ENCODE measurements at regions of chr11 and their contacts with region 1.

Region 1: GRCh38 chr11:727859-728748 is 19.2 kb upstream of the TALDO1 start:
- DNase-seq: peak; percentile 64 to 88 (median 83)
- ATAC-seq: peak; percentile 84
- H3K4me3 ChIP-seq: no peak overlapping the region
- H3K4me3 Mint-ChIP-seq: no peak overlapping the region
- H3K27ac ChIP-seq: no peak overlapping the region
- H3K27ac Mint-ChIP-seq: no peak overlapping the region
- H3K4me1 ChIP-seq: peaks cover 19% of the 10 kb centered on the region
- H3K4me1 Mint-ChIP-seq: peaks cover 10% of the 10 kb centered on the region
- H3K27me3 ChIP-seq: peaks cover 0 to 3% of the 10 kb centered on the region in 2 experiments
- H3K27me3 Mint-ChIP-seq: peaks cover 3% of the 10 kb centered on the region
- CTCF ChIP-seq: peak; percentile 94

Region 2: DNA sequence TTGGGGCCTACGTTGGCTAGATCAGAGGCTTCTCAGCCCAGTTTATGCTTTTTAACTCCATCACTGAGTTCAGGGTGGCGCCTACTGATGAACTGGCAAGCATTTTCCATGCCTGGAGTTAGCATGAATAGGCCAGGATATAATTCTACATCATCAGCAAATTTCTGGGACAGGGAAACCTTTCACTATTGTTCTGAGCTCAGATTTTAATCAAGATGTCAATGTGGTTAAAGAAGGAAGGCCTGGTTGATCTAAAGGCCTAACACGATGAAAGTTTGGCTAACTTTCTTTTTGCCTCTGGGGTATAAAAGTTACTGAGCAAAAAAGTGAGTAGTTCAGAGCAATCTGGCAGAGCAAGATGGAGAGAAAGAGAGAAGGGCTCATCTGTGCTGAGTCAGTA is 385.8 kb before region 1 on chr11:
- CTCF ChIA-PET with region 1: no interaction called
- POLR2A ChIA-PET with region 1: no interaction called
- intact Hi-C with region 1: no loop called
- DNase-seq: no peak
- ATAC-seq: no peak
- H3K4me3 ChIP-seq: no peak overlapping the region
- H3K4me3 Mint-ChIP-seq: no peak overlapping the region
- H3K27ac ChIP-seq: no peak overlapping the region
- H3K27ac Mint-ChIP-seq: no peak overlapping the region
- H3K4me1 ChIP-seq: peaks cover 17% of the 10 kb centered on the region
- H3K4me1 Mint-ChIP-seq: peaks cover 17% of the 10 kb centered on the region
- H3K27me3 ChIP-seq: no peaks in the 10 kb centered on the region
- H3K27me3 Mint-ChIP-seq: no peaks in the 10 kb centered on the region
- CTCF ChIP-seq: no peak

Region 3: GRCh38 chr11:422249-422656 is 305.9 kb before region 1 on chr11:
- CTCF ChIA-PET with region 1: no interaction called
- POLR2A ChIA-PET with region 1: no interaction called
- intact Hi-C with region 1: no loop called
- DNase-seq: no peak
- ATAC-seq: no peak
- H3K4me3 ChIP-seq: no peak overlapping the region
- H3K4me3 Mint-ChIP-seq: no peak overlapping the region
- H3K27ac ChIP-seq: no peak overlapping the region
- H3K27ac Mint-ChIP-seq: peak overlapping the region; percentile 38
- H3K4me1 ChIP-seq: peaks cover 6% of the 10 kb centered on the region
- H3K4me1 Mint-ChIP-seq: no peaks in the 10 kb centered on the region
- H3K27me3 ChIP-seq: no peaks in the 10 kb centered on the region
- H3K27me3 Mint-ChIP-seq: no peaks in the 10 kb centered on the region
- CTCF ChIP-seq: no peak

Region 4: DNA sequence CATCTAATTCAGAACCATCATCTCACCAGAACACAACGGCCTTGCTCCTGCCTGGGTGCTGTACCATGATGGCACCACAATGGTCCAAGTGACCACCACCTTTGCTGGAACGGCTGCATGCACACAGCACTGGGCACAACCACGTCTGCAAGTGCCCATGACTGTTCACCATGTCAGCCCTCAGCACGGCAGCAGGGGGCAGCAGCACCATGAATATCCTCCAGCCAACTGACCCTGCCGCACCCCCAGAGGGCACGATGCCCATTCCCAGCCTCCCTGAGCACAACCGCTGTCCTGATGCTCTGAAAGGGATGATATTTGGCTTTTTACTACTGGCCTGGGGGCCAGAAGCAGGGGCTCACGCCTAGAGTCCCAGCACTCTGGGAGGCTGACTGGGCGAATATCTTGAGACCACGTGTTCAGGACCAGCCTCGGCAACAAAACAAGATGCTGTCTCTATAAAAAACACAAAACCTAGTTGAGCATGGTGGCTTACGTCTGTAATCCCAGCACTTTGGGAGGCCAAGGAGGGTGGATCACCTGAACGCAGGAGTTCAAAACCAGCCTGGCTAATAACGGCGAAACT is 65.3 kb before region 1 on chr11:
- CTCF ChIA-PET with region 1: interaction called, 11 read pairs
- POLR2A ChIA-PET with region 1: no interaction called
- intact Hi-C with region 1: loop called (anchors 1 kb)
- DNase-seq: peak in 6 of 9 experiments; percentile 27 to 60 (median 48)
- ATAC-seq: peak; percentile 77
- H3K4me3 ChIP-seq: no peak overlapping the region
- H3K4me3 Mint-ChIP-seq: no peak overlapping the region
- H3K27ac ChIP-seq: no peak overlapping the region
- H3K27ac Mint-ChIP-seq: no peak overlapping the region
- H3K4me1 ChIP-seq: no peaks in the 10 kb centered on the region
- H3K4me1 Mint-ChIP-seq: no peaks in the 10 kb centered on the region
- H3K27me3 ChIP-seq: no peaks in the 10 kb centered on the region
- H3K27me3 Mint-ChIP-seq: no peaks in the 10 kb centered on the region
- CTCF ChIP-seq: peak; percentile 69

Region 5: DNA sequence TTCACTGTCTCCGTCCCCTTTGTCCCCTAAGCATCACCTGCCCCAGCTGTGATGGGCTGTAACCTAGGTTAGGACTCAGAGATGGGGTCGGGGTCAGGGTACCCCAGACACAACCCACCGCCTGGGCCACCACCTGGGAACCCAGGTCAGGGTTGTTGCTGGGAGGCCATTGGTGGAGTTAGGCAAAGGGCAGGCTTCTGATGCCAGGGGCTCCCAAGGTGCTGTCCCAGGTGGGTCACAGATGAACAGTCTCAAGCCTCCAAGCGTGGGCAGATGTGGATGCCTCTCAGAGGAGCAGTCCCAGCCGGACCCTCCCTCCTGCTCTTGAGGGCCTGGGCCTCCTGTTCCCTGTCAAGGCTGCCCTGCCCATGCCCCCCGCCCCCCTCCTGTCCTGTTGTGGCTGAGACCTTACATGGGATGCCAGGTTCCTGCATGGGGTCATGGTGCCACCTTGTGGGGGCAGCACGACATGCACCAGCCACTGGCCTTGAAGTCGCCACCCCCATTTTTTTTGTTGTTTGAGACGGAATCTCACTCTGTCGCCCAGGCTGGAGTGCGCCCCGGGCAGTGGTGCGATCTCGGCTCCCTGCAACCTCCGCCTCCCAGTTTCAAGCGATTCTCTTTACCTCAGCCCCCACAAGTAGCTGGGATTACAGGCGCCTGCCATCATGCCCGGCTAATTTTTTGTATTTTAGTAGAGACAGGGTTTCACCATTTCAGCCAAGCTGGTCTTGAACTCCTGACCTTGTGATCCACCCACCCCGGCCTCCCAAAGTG is 37.1 kb after region 1 on chr11:
- CTCF ChIA-PET with region 1: interaction called, 9 read pairs
- POLR2A ChIA-PET with region 1: no interaction called
- intact Hi-C with region 1: loop called in 1 of 2 experiments (anchors 1 kb)
- DNase-seq: peak; percentile 41 to 80 (median 70)
- ATAC-seq: peak; percentile 94
- H3K4me3 ChIP-seq: no peak overlapping the region
- H3K4me3 Mint-ChIP-seq: no peak overlapping the region
- H3K27ac ChIP-seq: no peak overlapping the region
- H3K27ac Mint-ChIP-seq: no peak overlapping the region
- H3K4me1 ChIP-seq: no peaks in the 10 kb centered on the region
- H3K4me1 Mint-ChIP-seq: no peaks in the 10 kb centered on the region
- H3K27me3 ChIP-seq: no peaks in the 10 kb centered on the region
- H3K27me3 Mint-ChIP-seq: no peaks in the 10 kb centered on the region
- CTCF ChIP-seq: peak; percentile 63

Region 6: DNA sequence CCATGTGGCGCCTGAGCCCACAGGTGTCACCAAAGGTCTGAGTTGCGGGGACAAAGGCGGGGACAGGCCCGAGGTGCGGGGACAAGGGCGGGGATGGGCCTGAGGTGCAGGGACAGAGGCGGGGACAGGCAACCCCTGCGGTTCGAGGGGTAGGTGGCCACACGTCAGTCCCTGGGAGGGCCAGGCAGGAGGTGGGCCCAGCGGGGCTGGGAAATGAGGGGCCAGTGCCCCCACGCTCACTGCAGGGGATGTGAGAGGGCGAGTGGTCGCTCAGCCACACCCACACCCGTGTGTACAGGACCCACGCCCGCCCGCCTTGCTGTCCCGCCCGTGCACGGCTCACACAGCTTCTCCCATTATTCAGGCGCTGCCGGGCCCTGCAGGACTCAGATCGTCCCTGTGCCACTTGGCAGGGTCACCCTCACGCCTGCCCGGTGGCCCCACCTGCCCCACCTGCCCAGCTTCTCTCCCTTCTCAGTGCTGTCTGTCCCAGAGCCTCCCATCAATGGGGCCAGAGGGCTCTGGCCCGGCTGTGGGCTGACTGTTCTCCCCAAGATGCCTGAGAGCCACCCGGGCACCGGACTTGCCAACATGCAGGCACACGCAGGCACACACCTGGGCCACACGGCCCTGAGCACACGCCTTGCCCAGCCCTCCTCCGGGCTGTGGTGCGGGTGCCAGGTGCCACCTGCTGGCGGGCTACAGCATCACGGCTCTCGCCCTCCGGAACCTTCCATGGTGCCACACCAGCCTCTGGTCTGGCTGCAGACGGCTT is 322.7 kb after region 1 on chr11:
- CTCF ChIA-PET with region 1: interaction called, 4 read pairs
- POLR2A ChIA-PET with region 1: no interaction called
- intact Hi-C with region 1: loop called in 1 of 2 experiments (anchors 10 kb)
- DNase-seq: peak; percentile 54 to 85 (median 70)
- ATAC-seq: peak; percentile 99
- H3K4me3 ChIP-seq: no peak overlapping the region
- H3K4me3 Mint-ChIP-seq: no peak overlapping the region
- H3K27ac ChIP-seq: no peak overlapping the region
- H3K27ac Mint-ChIP-seq: no peak overlapping the region
- H3K4me1 ChIP-seq: peaks cover 5% of the 10 kb centered on the region
- H3K4me1 Mint-ChIP-seq: no peaks in the 10 kb centered on the region
- H3K27me3 ChIP-seq: peaks cover 0 to 11% of the 10 kb centered on the region in 2 experiments
- H3K27me3 Mint-ChIP-seq: peaks cover 18% of the 10 kb centered on the region
- CTCF ChIP-seq: peak; percentile 87

Measured in CD8-positive, alpha-beta T cell (primary cell).